AG04450 (cell line): ENCODE measurements at regions of chr12 and their contacts with region 1.

Region 1: DNA sequence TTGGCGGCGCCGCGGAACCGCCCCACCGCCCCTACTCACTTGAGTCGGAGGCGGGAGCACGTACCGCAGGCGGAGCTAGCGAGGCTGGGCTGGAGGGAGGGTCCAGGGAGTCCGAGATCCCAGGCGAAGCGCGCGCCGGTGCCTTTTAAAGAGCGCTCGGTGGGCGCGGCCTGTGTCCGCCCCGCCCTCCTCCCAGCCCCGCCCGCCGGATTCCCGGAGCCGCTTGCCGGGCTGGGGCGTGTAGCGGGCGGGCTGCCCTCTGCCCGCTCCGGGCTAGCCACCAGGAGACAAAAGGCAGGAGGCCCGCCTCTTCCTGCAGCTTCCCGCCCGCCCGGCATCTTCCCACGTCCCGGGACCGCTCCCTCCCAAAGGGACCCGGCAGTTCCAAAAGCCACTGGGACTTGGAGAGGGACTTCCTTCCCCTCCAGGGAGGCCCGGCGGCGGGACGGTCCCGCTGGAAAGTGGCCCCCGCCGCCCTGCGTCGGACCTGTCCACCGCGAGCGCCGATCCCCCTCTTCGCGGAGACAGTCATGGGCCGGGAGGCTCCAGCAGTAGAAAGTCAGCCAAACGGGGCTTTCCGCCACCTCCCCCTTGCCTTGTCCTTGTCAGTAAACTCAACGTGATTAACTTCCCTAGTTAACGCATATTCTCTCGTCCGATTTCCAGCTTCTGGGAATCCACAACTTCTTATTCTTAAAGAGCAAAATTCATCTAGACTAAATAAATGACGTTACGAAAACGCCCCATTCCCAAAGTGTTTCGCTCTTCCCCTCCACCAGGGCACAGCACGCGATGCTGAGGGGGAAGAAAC is at the start of gene CSRP2:
- DNase-seq: peak; percentile 73
- H3K4me3 ChIP-seq: peak within 1 kb of the TSS; percentile 76
- H3K27ac ChIP-seq: peak within 1 kb of the TSS; percentile 94
- H3K27me3 ChIP-seq: no peaks in the 10 kb centered on the region
- CTCF ChIP-seq: peak; percentile 43
- polyA plus RNA-seq, gene CSRP2: 95.9 and 108 TPM in 2 replicates

Region 2: GRCh38 chr12:76123451-76124212 is 755.5 kb before region 1 on chr12:
- CTCF ChIA-PET with region 1: no interaction called
- POLR2A ChIA-PET with region 1: no interaction called
- DNase-seq: no peak
- H3K4me3 ChIP-seq: no peak overlapping the region
- H3K27ac ChIP-seq: no peak overlapping the region
- H3K27me3 ChIP-seq: no peaks in the 10 kb centered on the region
- CTCF ChIP-seq: no peak

Region 3: GRCh38 chr12:76643438-76643837 is 235.7 kb before region 1 on chr12:
- CTCF ChIA-PET with region 1: no interaction called
- POLR2A ChIA-PET with region 1: no interaction called
- DNase-seq: peak; percentile 32
- H3K4me3 ChIP-seq: no peak overlapping the region
- H3K27ac ChIP-seq: no peak overlapping the region
- H3K27me3 ChIP-seq: no peaks in the 10 kb centered on the region
- CTCF ChIP-seq: no peak

Region 4: GRCh38 chr12:76866726-76867125 is 12.4 kb before region 1 on chr12:
- CTCF ChIA-PET with region 1: interaction called, 3 read pairs
- POLR2A ChIA-PET with region 1: interaction called, 14 read pairs
- DNase-seq: no peak
- H3K4me3 ChIP-seq: no peak overlapping the region
- H3K27ac ChIP-seq: no peak overlapping the region
- H3K27me3 ChIP-seq: no peaks in the 10 kb centered on the region
- CTCF ChIP-seq: no peak

Region 5: GRCh38 chr12:76952995-76953394 is 73.9 kb after region 1 on chr12:
- CTCF ChIA-PET with region 1: no interaction called
- POLR2A ChIA-PET with region 1: no interaction called
- DNase-seq: no peak
- H3K4me3 ChIP-seq: no peak overlapping the region
- H3K27ac ChIP-seq: no peak overlapping the region
- H3K27me3 ChIP-seq: no peaks in the 10 kb centered on the region
- CTCF ChIP-seq: no peak

Region 6: DNA sequence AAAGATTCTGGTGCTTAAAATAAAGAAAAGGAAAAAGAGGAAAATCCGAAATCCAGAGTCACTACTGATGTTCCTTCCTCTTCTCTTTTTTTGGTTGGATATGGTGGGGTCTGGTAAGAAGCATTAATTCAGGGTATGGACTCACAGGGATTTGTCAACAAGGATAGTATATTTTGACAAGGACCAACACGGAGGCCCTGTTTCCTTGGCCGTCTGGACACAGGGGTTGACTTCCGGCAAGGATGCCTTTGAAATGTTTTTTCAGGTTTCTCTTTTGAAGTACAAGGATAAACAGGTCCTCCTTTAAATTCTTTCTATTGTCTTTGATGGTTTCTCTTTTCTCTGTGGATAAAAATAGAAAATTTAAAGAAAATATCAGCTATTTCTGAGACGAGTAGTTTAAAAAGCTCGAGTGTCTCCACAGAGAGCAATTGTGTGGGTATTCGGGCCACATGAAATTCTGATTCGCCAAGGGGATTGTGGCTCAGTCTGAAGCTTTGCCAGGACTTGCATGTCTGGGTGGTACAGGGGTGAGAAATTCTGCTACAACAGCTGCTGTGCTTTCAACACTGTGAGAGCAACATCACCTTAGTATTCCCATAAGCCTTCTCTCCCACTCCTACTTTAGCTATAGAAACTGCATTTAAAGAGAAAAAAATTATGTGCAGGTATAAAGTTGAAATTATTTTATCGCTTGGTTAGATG is 88.2 kb after region 1 on chr12:
- CTCF ChIA-PET with region 1: no interaction called
- POLR2A ChIA-PET with region 1: no interaction called
- DNase-seq: no peak
- H3K4me3 ChIP-seq: no peak overlapping the region
- H3K27ac ChIP-seq: no peak overlapping the region
- H3K27me3 ChIP-seq: no peaks in the 10 kb centered on the region
- CTCF ChIP-seq: no peak